Naive thymus-derived CD4-positive, alpha-beta T cell (primary cell): ENCODE measurements at regions of chr12 and their contacts with region 1.

Region 1: DNA sequence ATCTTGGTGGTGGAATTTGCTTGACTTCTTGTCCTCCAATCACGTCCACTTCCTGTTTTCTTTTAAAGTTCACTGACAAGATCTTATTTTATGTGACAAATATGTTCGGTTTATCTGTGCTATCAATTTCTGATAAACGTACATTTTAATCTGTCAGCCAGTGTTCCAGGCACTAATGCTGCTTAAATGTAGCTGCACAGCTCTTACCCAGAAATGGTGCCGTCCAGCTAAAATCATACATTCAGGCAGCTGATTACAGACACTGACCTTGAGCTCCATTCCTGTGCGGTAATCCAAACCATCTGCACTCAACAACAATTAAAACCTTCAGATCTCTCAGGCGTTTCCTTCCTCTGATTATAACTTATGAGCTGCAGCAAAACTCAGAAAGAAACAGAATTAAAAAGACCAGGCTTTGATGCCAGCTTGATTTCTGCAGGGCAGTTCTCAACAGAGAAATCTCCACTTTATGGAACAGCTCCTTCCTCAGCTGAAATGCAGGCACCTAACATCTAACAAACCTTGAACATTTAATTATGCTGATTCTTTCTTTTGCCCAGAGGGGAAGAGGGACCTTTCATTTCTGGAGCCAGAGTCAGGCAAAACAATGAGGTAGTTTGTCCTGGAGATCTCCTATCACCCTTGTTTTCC is 26.4 kb upstream of the RASSF3 start:
- DNase-seq: peak in 4 of 9 donors; percentile 16 to 37 (median 26)
- ATAC-seq: peak; percentile 48
- H3K4me3 ChIP-seq: peak overlapping the region; percentile 25
- H3K4me3 Mint-ChIP-seq: peak overlapping the region; percentile 29 to 90 (median 78)
- H3K27ac ChIP-seq: peak overlapping the region; percentile 21
- H3K27ac Mint-ChIP-seq: peak overlapping the region; percentile 42 to 94 (median 82)
- H3K4me1 ChIP-seq: peaks cover 6 to 25% of the 10 kb centered on the region in 2 donors
- H3K4me1 Mint-ChIP-seq: peaks cover 18 to 43% (median 32%) of the 10 kb centered on the region in 7 donors
- H3K27me3 ChIP-seq: no peaks in the 10 kb centered on the region
- H3K27me3 Mint-ChIP-seq: peaks cover 0 to 4% (median 0%) of the 10 kb centered on the region in 5 donors

Region 2: GRCh38 chr12:64571411-64571810 is 12.5 kb before region 1 on chr12:
- CTCF ChIA-PET with region 1: no interaction called
- POLR2A ChIA-PET with region 1: interaction called, 28 read pairs
- intact Hi-C with region 1: no loop called
- DNase-seq: peak in 7 of 9 donors; percentile 10 to 64 (median 54)
- ATAC-seq: peak; percentile 62
- H3K4me3 ChIP-seq: no peak overlapping the region
- H3K4me3 Mint-ChIP-seq: peak overlapping the region in 7 of 10 donors; percentile 2 to 57 (median 40)
- H3K27ac ChIP-seq: no peak overlapping the region
- H3K27ac Mint-ChIP-seq: peak overlapping the region in 8 of 9 donors; percentile 7 to 87 (median 65)
- H3K4me1 ChIP-seq: peaks cover 0 to 23% of the 10 kb centered on the region in 2 donors
- H3K4me1 Mint-ChIP-seq: peaks cover 15 to 60% (median 54%) of the 10 kb centered on the region in 7 donors
- H3K27me3 ChIP-seq: no peaks in the 10 kb centered on the region
- H3K27me3 Mint-ChIP-seq: no peaks in the 10 kb centered on the region

Region 3: GRCh38 chr12:64596252-64596793 is 12.4 kb after region 1 on chr12:
- CTCF ChIA-PET with region 1: no interaction called
- POLR2A ChIA-PET with region 1: interaction called, 4 read pairs
- intact Hi-C with region 1: loop called in 1 of 2 experiments (anchors 2 kb)
- DNase-seq: no peak
- ATAC-seq: peak; percentile 50
- H3K4me3 ChIP-seq: no peak overlapping the region
- H3K4me3 Mint-ChIP-seq: peak overlapping the region in 8 of 10 donors; percentile 4 to 65 (median 32)
- H3K27ac ChIP-seq: no peak overlapping the region
- H3K27ac Mint-ChIP-seq: peak overlapping the region in 6 of 9 donors; percentile 26 to 88 (median 60)
- H3K4me1 ChIP-seq: peaks cover 9 to 41% of the 10 kb centered on the region in 2 donors
- H3K4me1 Mint-ChIP-seq: peaks cover 27 to 57% (median 49%) of the 10 kb centered on the region in 7 donors
- H3K27me3 ChIP-seq: no peaks in the 10 kb centered on the region
- H3K27me3 Mint-ChIP-seq: peaks cover 0 to 4% (median 0%) of the 10 kb centered on the region in 5 donors

Region 4: DNA sequence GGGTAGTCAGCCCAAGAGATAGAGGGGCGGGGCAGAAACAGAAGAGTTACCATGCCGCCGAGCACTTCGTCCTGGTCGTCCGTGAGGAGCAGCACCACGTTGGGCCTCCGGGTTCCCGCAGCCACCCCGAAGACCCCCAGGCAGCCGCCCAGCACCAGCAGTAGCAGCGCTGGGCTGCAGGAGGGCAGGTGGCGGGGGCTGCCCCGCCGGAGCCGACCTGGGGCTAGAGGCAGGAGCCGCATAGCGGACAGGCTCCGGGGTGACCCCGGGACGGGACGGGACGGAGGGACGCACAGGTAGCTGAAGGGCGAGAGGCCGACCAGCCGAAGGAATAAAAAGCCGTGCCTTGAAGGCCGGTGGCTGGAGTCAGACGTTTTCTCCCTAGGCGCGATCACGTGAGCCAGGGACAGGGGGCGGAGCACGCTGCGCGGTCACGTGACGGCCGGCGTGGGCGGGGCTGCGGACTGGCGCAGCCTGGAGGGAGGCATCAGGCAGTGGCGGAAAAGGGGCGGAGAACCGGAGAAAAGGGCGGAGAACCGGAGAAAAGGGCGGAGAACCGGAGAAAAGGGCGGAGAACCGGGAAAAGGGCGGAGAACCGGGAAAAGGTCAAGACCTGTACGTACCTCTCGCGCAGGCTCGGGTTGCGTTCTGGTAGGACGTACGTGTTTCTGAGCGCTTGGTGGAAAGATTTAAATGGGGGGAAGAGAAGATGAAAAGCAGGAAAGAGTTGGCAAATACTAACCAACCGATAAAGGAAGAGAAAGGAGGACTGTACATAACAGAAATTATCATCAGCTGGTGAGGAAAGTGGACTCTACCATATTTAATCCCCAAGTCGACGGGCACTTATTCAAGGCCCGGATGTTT is 175.4 kb after region 1 on chr12 and contains the start of gene GNS:
- CTCF ChIA-PET with region 1: no interaction called
- POLR2A ChIA-PET with region 1: no interaction called
- intact Hi-C with region 1: no loop called
- DNase-seq: peak; percentile 81 to 99 (median 86)
- ATAC-seq: peak; percentile 96
- H3K4me3 ChIP-seq: peak within 1 kb of the TSS; percentile 98
- H3K4me3 Mint-ChIP-seq: peak within 1 kb of the TSS; percentile 86 to 99 (median 96)
- H3K27ac ChIP-seq: peak within 1 kb of the TSS; percentile 77
- H3K27ac Mint-ChIP-seq: peak within 1 kb of the TSS; percentile 78 to 96 (median 91)
- H3K4me1 ChIP-seq: peaks cover 0 to 21% of the 10 kb centered on the region in 2 donors
- H3K4me1 Mint-ChIP-seq: peaks cover 17 to 60% (median 48%) of the 10 kb centered on the region in 7 donors
- H3K27me3 ChIP-seq: no peaks in the 10 kb centered on the region
- H3K27me3 Mint-ChIP-seq: peaks cover 0 to 4% (median 0%) of the 10 kb centered on the region in 5 donors
- total RNA-seq, gene GNS: 24.4 to 62.8 (median 35.2) TPM